ENCODE measurements at regions of chr1 and their contacts with region 1.

Region 1: DNA sequence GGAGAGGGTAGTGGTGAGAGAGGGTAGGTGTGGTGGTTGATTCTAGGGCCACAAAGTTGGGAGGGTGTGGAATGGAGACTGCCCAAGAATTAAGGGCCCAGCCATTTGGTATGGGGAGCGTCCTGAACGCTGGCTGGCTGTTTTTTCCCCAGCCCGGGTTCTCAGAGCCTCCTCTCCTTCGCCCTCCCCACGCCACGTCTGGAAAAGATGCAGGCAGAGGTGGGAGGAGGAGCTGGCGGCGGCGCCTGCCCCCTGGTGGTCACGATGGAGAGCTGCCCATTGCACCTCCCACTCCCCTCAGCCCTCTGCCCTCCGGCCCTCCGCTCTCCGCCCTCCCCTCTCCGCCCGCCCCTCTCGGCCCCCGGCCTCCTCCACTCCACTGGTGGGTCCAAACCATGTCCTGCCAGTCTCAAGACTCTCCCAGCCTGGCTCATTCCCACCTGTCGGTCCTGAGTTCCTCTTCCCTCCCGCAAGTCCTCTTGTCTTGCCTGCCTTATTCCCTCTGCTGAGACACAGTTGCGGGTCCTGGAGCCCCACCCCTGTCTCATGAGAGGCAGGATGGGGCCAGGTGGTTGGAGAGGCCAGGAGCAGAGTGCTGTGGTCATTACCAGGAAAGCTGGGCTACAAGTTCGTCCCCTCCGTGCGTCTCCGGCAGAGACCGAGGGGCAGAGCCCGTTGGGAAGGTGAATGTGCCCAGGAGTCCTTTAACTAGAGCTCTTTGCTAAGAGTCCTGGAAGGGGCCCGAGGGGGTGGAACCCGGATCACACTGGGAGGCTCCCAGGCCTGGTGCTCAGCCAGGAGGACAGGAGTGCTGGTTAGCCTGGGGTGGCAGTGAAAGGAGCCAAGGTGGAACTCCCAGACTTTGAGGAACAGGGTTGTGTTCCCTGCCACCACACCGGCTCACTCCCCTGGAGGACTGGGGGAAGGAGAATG is 22.6 kb downstream of the ETNK2 start:
- DNase-seq: peak; percentile 77 to 86 (median 80)
- H3K4me3 ChIP-seq: peak overlapping the region; percentile 27
- H3K27ac ChIP-seq: peak overlapping the region; percentile 35 to 66
- H3K4me1 ChIP-seq: peaks cover 17% of the 10 kb centered on the region
- H3K27me3 ChIP-seq: no peaks in the 10 kb centered on the region
- CTCF ChIP-seq: peak; percentile 85 to 97 (median 87)
- EP300 ChIP-seq: no peak
- POLR2A ChIP-seq: peak; percentile 11

Region 2: DNA sequence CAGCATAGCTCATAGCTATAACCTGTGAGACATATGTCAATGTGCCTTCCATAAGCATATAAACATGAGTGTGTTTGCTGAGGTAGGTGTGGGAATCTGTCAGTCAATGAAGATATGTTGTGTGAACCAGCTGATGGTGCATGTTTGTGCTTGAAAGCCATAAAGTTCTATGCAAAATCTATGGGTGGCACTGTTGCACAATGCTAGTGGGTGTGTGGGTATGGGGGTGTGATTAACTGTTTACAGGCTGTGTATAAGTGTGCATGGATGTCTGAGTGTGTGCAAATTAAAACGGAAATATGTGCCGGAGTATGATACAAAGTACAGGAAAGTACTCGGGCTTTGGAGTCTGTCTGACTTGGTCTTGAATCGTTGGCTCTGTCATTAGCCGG is 503.6 kb before region 1 on chr1:
- intact Hi-C with region 1: loop called in 1 of 4 experiments (anchors 5 kb)
- DNase-seq: peak in 2 of 5 donors; percentile 29 to 54
- H3K4me3 ChIP-seq: peak overlapping the region; percentile 78
- H3K27ac ChIP-seq: no peak overlapping the region
- H3K4me1 ChIP-seq: peaks cover 11% of the 10 kb centered on the region
- H3K27me3 ChIP-seq: no peaks in the 10 kb centered on the region
- CTCF ChIP-seq: peak in 2 of 3 donors; percentile 36 to 37
- EP300 ChIP-seq: no peak
- POLR2A ChIP-seq: no peak

Region 3: GRCh38 chr1:203861379-203862184 is 267.6 kb before region 1 on chr1 and contains the start of gene SNRPE:
- intact Hi-C with region 1: loop called in 1 of 4 experiments (anchors 2 kb)
- DNase-seq: peak; percentile 95 to 96 (median 95)
- H3K4me3 ChIP-seq: peak within 1 kb of the TSS; percentile 84
- H3K27ac ChIP-seq: peak within 1 kb of the TSS in 1 of 2 donors; percentile 15
- H3K4me1 ChIP-seq: peaks cover 3% of the 10 kb centered on the region
- H3K27me3 ChIP-seq: no peaks in the 10 kb centered on the region
- CTCF ChIP-seq: peak; percentile 95 to 97 (median 97)
- EP300 ChIP-seq: no peak
- POLR2A ChIP-seq: peak; percentile 71
- total RNA-seq, gene SNRPE: 72.5 to 151 (median 127) TPM

Region 4: DNA sequence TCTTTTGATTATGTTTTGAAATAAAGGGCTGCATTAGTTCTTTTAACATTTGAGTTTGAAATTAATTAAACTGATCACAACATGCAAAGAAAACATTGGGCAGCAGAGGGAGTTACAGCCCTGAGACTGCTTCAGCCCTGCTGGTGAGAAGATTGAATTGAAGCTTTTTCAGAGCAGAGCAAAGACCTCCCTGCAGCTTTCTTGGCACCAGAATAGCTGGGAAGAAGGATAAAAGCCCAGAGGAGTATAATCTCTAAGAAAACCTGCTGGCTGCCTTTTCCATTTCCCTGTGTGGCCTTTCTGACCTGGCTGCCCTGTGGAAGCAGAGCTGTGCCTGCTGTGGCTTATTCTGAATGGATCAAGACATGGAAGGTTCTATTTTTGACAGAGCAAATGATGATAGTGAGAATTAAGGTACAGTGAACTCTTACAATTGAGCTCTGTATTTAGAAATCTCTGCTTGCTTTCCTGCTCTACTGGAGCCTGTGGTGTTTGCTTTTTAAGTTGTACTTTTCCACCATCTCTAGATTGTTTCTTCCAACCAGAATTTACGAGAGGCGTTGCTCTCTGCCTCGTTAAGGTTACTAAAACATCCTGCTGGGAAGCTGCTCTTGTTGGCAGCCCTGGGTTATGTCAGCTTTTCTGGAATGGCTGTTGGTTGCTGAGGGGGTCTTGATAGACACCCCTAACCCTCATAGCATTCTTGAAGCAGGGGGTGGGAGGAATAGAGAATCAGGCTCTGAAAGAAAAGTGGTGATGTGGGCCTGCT is 257.9 kb before region 1 on chr1:
- intact Hi-C with region 1: loop called in 3 of 4 experiments (anchors 2 to 5 kb)
- DNase-seq: peak in 1 of 5 donors; percentile 25
- H3K4me3 ChIP-seq: no peak overlapping the region
- H3K27ac ChIP-seq: no peak overlapping the region
- H3K4me1 ChIP-seq: no peaks in the 10 kb centered on the region
- H3K27me3 ChIP-seq: no peaks in the 10 kb centered on the region
- CTCF ChIP-seq: peak; percentile 28 to 89 (median 76)
- EP300 ChIP-seq: no peak
- POLR2A ChIP-seq: no peak

Region 5: GRCh38 chr1:204003529-204003928 is 125.7 kb before region 1 on chr1:
- intact Hi-C with region 1: no loop called
- DNase-seq: no peak
- H3K4me3 ChIP-seq: no peak overlapping the region
- H3K27ac ChIP-seq: no peak overlapping the region
- H3K4me1 ChIP-seq: no peaks in the 10 kb centered on the region
- H3K27me3 ChIP-seq: no peaks in the 10 kb centered on the region
- CTCF ChIP-seq: no peak
- EP300 ChIP-seq: no peak
- POLR2A ChIP-seq: no peak

Region 6: DNA sequence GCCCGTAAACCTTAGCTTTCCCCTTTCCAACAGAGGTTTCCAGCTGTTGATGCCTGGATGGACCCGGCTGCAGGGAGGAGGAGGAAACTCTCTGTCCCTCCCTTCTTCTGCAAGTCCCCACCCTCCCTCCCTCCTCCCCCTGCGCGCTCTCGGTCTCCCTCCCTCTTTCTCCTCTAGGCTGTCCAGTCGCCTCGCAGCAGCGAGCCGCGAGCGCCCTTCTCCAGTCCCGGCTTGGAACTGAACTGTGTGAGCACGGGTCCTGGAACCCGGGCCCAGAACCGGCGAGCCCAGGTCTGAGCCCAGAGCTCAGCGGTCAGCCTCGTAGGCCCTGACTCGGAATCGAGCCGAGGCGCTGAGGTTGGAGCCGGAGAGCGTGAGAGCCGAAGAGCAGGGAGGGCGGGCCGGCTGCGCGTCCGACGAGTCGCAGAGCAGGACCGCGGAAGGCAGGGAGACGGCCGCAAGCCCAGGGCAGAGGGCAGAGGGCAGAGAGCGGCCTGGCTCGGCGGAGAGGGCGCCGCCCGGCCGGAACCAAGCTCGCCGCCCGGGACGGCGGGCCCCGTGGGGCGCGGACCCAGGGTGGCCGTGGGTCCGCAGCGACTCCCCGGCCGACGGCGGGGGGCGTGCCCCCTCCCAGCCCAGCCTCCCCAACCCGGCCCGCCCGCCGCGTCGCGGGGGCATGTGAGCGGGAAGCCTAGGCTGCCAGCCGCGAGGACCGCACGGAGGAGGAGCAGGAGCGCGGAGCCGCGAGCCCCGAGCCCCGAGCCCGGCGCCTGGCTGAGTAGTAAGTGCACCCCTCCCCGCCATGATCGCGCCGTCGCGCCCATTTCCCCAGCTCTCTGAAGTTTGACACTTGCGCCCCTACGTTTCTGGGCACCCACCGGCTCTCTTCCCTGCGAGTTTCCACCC is 56.0 kb before region 1 on chr1 and contains the start of gene SOX13:
- intact Hi-C with region 1: loop called in 3 of 4 experiments (anchors 2 to 10 kb)
- DNase-seq: peak; percentile 84 to 89 (median 88)
- H3K4me3 ChIP-seq: peak within 1 kb of the TSS; percentile 70
- H3K27ac ChIP-seq: peak within 1 kb of the TSS; percentile 87 to 89
- H3K4me1 ChIP-seq: peaks cover 5% of the 10 kb centered on the region
- H3K27me3 ChIP-seq: no peaks in the 10 kb centered on the region
- CTCF ChIP-seq: peak in 1 of 3 donors; percentile 15
- EP300 ChIP-seq: no peak
- POLR2A ChIP-seq: peak; percentile 91
- total RNA-seq, gene SOX13: 12.0 to 43.0 (median 27.2) TPM

Region 7: GRCh38 chr1:204080163-204080903 is 48.9 kb before region 1 on chr1:
- intact Hi-C with region 1: loop called (anchors 2 to 10 kb)
- DNase-seq: peak; percentile 60 to 86 (median 74)
- H3K4me3 ChIP-seq: no peak overlapping the region
- H3K27ac ChIP-seq: no peak overlapping the region
- H3K4me1 ChIP-seq: peaks cover 22% of the 10 kb centered on the region
- H3K27me3 ChIP-seq: no peaks in the 10 kb centered on the region
- CTCF ChIP-seq: no peak
- EP300 ChIP-seq: no peak
- POLR2A ChIP-seq: no peak